Activated naive CD4-positive, alpha-beta T cell treated with anti-CD3 and anti-CD28 coated beads for 36 hours (primary cell): ENCODE measurements at regions of chr1 and their contacts with region 1.

Region 1: GRCh38 chr1:19010995-19011844 is 54.7 kb upstream of the IFFO2 start:
- DNase-seq: peak; percentile 95
- H3K4me3 Mint-ChIP-seq: no peak overlapping the region
- H3K27ac Mint-ChIP-seq: peak overlapping the region; percentile 83
- H3K4me1 Mint-ChIP-seq: peaks cover 35% of the 10 kb centered on the region
- H3K27me3 Mint-ChIP-seq: no peaks in the 10 kb centered on the region

Region 2: DNA sequence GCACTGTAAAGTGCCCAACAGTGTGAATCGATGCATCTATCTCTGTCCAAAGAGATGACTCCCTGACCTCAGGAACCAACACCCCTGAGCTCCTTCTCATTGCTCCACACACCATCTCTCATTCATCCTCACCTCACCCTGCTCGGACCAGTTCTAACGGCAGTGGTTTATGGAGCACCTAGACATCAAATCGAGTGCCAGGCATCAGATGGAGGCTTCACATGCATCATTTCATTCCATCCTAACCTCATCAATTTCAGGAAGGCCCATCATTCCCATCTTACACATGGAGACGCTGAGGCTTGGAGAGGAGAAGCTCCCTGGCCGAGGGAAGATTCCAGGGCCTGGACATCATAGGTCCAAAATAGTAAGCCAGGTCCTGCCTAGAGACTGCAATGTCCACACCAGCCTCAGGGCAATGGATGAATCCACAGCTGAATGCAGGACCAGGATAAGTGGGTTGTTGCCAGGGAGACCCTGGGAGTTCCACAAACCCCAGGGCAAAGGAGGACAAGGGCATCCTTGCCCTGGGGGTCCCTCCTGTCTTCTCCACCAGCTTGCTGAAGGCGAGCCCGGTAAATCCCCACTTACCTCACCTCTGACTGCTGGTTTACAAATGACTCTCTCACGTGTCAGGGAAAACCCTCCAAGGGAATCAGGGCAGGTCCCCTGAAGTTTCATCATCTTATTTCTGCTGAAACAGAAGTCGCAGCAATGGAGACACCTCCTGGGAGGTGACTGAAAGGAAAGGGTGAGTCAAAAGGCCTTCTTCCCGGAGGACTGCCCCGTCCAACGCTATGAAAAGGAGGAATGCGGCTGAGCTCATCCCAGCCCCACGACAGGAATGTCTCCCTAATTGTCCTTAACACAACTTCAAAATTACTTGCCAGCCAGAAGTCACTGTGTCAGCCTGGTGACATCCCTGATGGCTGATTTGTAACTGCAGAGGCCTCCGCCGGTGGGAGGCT is 45.7 kb before region 1 on chr1:
- CTCF ChIA-PET with region 1: no interaction called
- intact Hi-C with region 1: loop called (anchors 1 kb)
- DNase-seq: peak; percentile 86
- H3K4me3 Mint-ChIP-seq: no peak overlapping the region
- H3K27ac Mint-ChIP-seq: peak overlapping the region; percentile 77
- H3K4me1 Mint-ChIP-seq: peaks cover 12% of the 10 kb centered on the region
- H3K27me3 Mint-ChIP-seq: no peaks in the 10 kb centered on the region

Region 3: DNA sequence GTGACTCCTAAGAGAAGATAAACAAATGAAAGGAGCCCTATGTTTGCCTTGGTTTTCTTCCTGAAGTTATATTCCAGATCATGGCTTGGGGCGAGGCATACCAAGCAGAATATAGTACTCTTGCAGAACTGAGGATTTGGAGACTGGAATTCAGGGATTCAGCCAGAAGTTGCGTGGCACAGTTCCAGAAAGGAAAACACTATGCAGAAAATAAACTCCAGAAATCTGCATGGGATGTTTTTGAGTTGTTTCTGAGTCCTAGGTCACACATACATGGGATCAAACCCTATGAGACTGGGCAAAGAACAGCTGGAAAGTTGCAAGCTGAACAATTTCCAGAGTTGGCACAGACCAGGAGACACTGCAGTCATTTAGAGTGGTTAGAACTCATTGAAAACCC is 11.9 kb before region 1 on chr1:
- CTCF ChIA-PET with region 1: no interaction called
- intact Hi-C with region 1: loop called (anchors 1 kb)
- DNase-seq: no peak
- H3K4me3 Mint-ChIP-seq: no peak overlapping the region
- H3K27ac Mint-ChIP-seq: no peak overlapping the region
- H3K4me1 Mint-ChIP-seq: peaks cover 28% of the 10 kb centered on the region
- H3K27me3 Mint-ChIP-seq: no peaks in the 10 kb centered on the region

Region 4: GRCh38 chr1:19074902-19075721 is 63.9 kb after region 1 on chr1:
- CTCF ChIA-PET with region 1: no interaction called
- intact Hi-C with region 1: loop called (anchors 1 kb)
- DNase-seq: no peak
- H3K4me3 Mint-ChIP-seq: no peak overlapping the region
- H3K27ac Mint-ChIP-seq: peak overlapping the region; percentile 74
- H3K4me1 Mint-ChIP-seq: peaks cover 53% of the 10 kb centered on the region
- H3K27me3 Mint-ChIP-seq: no peaks in the 10 kb centered on the region

Region 5: DNA sequence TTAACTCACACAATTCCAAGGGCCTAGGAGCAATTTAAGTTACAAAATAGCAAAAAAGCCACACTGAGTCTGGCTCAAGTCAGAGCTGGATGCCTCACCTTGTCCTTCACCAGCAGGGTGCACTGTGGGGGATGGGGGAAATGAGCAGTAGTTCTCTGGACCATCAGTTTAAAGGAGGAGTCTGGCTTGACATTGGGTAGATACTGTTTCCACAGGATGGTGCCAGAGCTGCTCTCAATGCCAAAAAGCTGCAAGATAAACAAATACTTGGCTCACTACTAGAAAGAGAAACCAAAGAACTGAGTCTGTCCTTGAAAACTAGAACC is 221.3 kb after region 1 on chr1:
- CTCF ChIA-PET with region 1: no interaction called
- intact Hi-C with region 1: no loop called
- DNase-seq: no peak
- H3K4me3 Mint-ChIP-seq: no peak overlapping the region
- H3K27ac Mint-ChIP-seq: no peak overlapping the region
- H3K4me1 Mint-ChIP-seq: no peaks in the 10 kb centered on the region
- H3K27me3 Mint-ChIP-seq: no peaks in the 10 kb centered on the region